CD4-positive, alpha-beta T cell (primary cell): ENCODE measurements at regions of chr2 and their contacts with region 1.

Region 1: DNA sequence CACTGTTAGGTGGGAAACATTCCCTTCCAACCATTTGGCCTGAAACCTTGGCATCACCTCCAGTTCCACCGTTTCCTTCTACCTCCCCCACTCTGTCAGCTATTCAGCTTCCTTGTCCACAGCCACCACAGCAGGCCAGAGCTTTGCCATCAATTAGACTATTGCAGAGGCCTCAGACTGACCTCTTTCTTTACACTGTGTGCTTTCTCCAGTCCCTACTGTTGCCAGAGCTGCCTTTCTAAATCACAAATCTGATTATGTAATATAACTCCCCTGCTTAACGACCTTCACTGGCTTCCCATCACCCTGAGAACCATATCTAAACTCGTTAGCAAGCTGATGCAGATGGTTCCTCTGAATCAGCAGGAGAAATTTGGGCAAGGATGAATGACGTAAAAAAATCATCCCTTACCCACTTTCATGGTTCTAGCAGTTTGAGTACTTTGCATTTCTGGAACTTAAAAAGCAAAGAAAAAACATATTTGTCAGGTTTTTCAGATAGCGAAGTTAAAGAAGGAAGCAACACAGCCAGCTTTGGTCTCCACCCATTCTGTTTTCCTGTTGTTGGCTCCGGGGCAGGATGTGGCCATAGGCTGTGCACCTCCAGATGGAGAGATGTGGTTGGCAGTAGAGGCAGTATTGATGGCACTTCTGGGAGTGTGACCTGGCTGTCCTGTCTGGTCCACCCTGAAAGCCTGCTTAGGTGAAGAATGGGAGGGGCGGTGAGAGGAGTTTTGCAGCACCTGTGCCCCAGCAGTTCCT is 422.1 kb downstream of the PARD3B start:
- DNase-seq: peak; percentile 33 to 87 (median 68)
- ATAC-seq: peak; percentile 78
- H3K4me3 ChIP-seq: no peak overlapping the region
- H3K4me3 Mint-ChIP-seq: peak overlapping the region; percentile 44
- H3K27ac ChIP-seq: peak overlapping the region; percentile 69 to 79
- H3K27ac Mint-ChIP-seq: peak overlapping the region; percentile 95
- H3K4me1 ChIP-seq: peaks cover 39% of the 10 kb centered on the region
- H3K4me1 Mint-ChIP-seq: peaks cover 74% of the 10 kb centered on the region
- H3K27me3 ChIP-seq: no peaks in the 10 kb centered on the region
- H3K27me3 Mint-ChIP-seq: no peaks in the 10 kb centered on the region
- CTCF ChIP-seq: no peak

Region 2: DNA sequence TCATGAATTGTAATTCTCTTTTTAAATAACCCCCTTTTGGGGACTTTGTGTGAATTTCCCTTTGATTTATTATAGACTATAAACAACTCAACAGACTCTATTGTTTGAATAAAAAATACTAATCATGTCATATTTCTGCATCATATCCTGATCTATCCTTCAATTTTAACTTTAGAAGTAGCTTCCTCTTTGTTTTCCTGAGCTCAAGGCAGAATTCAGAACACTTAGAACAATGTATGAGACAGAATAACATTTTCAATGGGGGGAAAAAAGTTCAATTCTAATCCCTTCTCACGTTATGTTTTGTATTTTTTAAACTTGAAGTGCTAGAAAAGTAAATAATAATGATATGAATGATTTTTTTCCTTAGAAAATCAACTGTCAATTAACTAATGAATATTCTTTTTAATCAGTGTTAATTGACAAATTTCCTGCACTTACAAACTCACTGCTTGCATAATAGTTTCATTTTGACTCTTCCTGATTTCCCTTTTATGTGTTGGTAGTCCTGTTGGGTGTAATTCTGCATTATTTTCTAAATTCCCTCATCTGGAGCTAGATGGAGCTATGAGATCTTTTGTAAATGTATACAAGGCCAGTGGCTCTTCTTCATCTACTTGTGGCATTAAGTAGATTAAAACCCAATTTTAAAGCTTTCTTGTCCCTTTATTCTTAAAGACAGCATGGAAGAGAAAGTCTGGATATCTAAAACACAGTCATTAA is 96.0 kb before region 1 on chr2:
- CTCF ChIA-PET with region 1: no interaction called
- POLR2A ChIA-PET with region 1: interaction called, 13 read pairs
- intact Hi-C with region 1: no loop called
- DNase-seq: peak in 3 of 14 experiments; percentile 60 to 71 (median 61)
- ATAC-seq: peak; percentile 59
- H3K4me3 ChIP-seq: no peak overlapping the region
- H3K4me3 Mint-ChIP-seq: no peak overlapping the region
- H3K27ac ChIP-seq: no peak overlapping the region
- H3K27ac Mint-ChIP-seq: no peak overlapping the region
- H3K4me1 ChIP-seq: peaks cover 3% of the 10 kb centered on the region
- H3K4me1 Mint-ChIP-seq: peaks cover 52% of the 10 kb centered on the region
- H3K27me3 ChIP-seq: no peaks in the 10 kb centered on the region
- H3K27me3 Mint-ChIP-seq: no peaks in the 10 kb centered on the region
- CTCF ChIP-seq: peak; percentile 84

Region 3: GRCh38 chr2:204885747-204886146 is 81.6 kb before region 1 on chr2:
- CTCF ChIA-PET with region 1: no interaction called
- POLR2A ChIA-PET with region 1: interaction called, 10 read pairs
- intact Hi-C with region 1: no loop called
- DNase-seq: peak in 3 of 14 experiments; percentile 13 to 28 (median 26)
- ATAC-seq: no peak
- H3K4me3 ChIP-seq: no peak overlapping the region
- H3K4me3 Mint-ChIP-seq: no peak overlapping the region
- H3K27ac ChIP-seq: no peak overlapping the region
- H3K27ac Mint-ChIP-seq: no peak overlapping the region
- H3K4me1 ChIP-seq: peaks cover 6% of the 10 kb centered on the region
- H3K4me1 Mint-ChIP-seq: peaks cover 20% of the 10 kb centered on the region
- H3K27me3 ChIP-seq: no peaks in the 10 kb centered on the region
- H3K27me3 Mint-ChIP-seq: no peaks in the 10 kb centered on the region
- CTCF ChIP-seq: no peak

Region 4: DNA sequence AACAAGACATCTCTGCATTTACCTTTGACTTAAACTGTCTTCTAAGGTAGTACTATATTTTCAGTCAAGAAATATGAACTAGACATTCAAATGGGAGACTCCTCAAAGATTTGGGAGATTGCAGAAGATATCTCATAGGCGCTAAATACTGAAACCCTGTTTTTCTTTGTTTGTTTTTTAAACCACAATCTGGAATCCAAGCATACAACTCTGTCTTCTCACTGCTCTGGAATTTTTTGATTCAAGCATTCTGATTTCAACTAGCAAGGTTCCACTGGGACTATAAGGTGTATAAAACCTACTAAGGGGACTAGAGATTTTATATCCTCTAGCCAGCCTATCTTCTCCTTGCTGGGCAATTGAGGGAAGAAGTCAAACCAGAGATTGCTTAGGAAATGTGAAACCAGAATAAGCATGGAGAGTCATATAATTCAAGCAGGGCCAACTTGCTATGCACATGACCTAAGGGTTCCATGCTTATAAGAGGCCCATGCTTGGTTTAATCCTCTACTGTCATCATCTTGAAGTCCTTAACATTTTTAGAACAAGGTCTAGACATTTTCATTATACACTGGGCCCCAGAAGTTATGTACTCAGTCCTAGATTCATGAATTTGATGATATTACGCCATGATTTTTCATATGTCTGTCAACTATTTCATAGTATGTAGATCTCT is 16.6 kb before region 1 on chr2:
- CTCF ChIA-PET with region 1: no interaction called
- POLR2A ChIA-PET with region 1: interaction called, 35 read pairs
- intact Hi-C with region 1: loop called in 1 of 2 experiments (anchors 1 kb)
- DNase-seq: no peak
- ATAC-seq: no peak
- H3K4me3 ChIP-seq: no peak overlapping the region
- H3K4me3 Mint-ChIP-seq: no peak overlapping the region
- H3K27ac ChIP-seq: no peak overlapping the region
- H3K27ac Mint-ChIP-seq: peak overlapping the region; percentile 11
- H3K4me1 ChIP-seq: peaks cover 10% of the 10 kb centered on the region
- H3K4me1 Mint-ChIP-seq: peaks cover 59% of the 10 kb centered on the region
- H3K27me3 ChIP-seq: no peaks in the 10 kb centered on the region
- H3K27me3 Mint-ChIP-seq: no peaks in the 10 kb centered on the region
- CTCF ChIP-seq: no peak

Region 5: GRCh38 chr2:204982303-204982702 is 14.9 kb after region 1 on chr2:
- CTCF ChIA-PET with region 1: no interaction called
- POLR2A ChIA-PET with region 1: interaction called, 15 read pairs
- intact Hi-C with region 1: no loop called
- DNase-seq: peak in 1 of 14 experiments; percentile 25
- ATAC-seq: peak; percentile 43
- H3K4me3 ChIP-seq: no peak overlapping the region
- H3K4me3 Mint-ChIP-seq: no peak overlapping the region
- H3K27ac ChIP-seq: no peak overlapping the region
- H3K27ac Mint-ChIP-seq: peak overlapping the region; percentile 13
- H3K4me1 ChIP-seq: peaks cover 4% of the 10 kb centered on the region
- H3K4me1 Mint-ChIP-seq: peaks cover 27% of the 10 kb centered on the region
- H3K27me3 ChIP-seq: no peaks in the 10 kb centered on the region
- H3K27me3 Mint-ChIP-seq: no peaks in the 10 kb centered on the region
- CTCF ChIP-seq: no peak

Region 6: GRCh38 chr2:205017381-205017780 is 50.0 kb after region 1 on chr2:
- CTCF ChIA-PET with region 1: no interaction called
- POLR2A ChIA-PET with region 1: no interaction called
- intact Hi-C with region 1: no loop called
- DNase-seq: no peak
- ATAC-seq: no peak
- H3K4me3 ChIP-seq: no peak overlapping the region
- H3K4me3 Mint-ChIP-seq: no peak overlapping the region
- H3K27ac ChIP-seq: no peak overlapping the region
- H3K27ac Mint-ChIP-seq: no peak overlapping the region
- H3K4me1 ChIP-seq: no peaks in the 10 kb centered on the region
- H3K4me1 Mint-ChIP-seq: peaks cover 5% of the 10 kb centered on the region
- H3K27me3 ChIP-seq: no peaks in the 10 kb centered on the region
- H3K27me3 Mint-ChIP-seq: no peaks in the 10 kb centered on the region
- CTCF ChIP-seq: no peak

Region 7: GRCh38 chr2:205077159-205077558 is 109.8 kb after region 1 on chr2:
- CTCF ChIA-PET with region 1: no interaction called
- POLR2A ChIA-PET with region 1: interaction called, 6 read pairs
- intact Hi-C with region 1: loop called in 1 of 2 experiments (anchors 2 kb)
- DNase-seq: peak in 4 of 14 experiments; percentile 12 to 70 (median 60)
- ATAC-seq: peak; percentile 79
- H3K4me3 ChIP-seq: peak overlapping the region; percentile 17
- H3K4me3 Mint-ChIP-seq: peak overlapping the region; percentile 79
- H3K27ac ChIP-seq: peak overlapping the region; percentile 57 to 61
- H3K27ac Mint-ChIP-seq: peak overlapping the region; percentile 94
- H3K4me1 ChIP-seq: peaks cover 12% of the 10 kb centered on the region
- H3K4me1 Mint-ChIP-seq: peaks cover 76% of the 10 kb centered on the region
- H3K27me3 ChIP-seq: no peaks in the 10 kb centered on the region
- H3K27me3 Mint-ChIP-seq: no peaks in the 10 kb centered on the region
- CTCF ChIP-seq: no peak

Region 8: GRCh38 chr2:205133544-205133943 is 166.2 kb after region 1 on chr2:
- CTCF ChIA-PET with region 1: no interaction called
- POLR2A ChIA-PET with region 1: interaction called, 12 read pairs
- intact Hi-C with region 1: no loop called
- DNase-seq: no peak
- ATAC-seq: no peak
- H3K4me3 ChIP-seq: no peak overlapping the region
- H3K4me3 Mint-ChIP-seq: no peak overlapping the region
- H3K27ac ChIP-seq: no peak overlapping the region
- H3K27ac Mint-ChIP-seq: no peak overlapping the region
- H3K4me1 ChIP-seq: peaks cover 9% of the 10 kb centered on the region
- H3K4me1 Mint-ChIP-seq: peaks cover 22% of the 10 kb centered on the region
- H3K27me3 ChIP-seq: no peaks in the 10 kb centered on the region
- H3K27me3 Mint-ChIP-seq: no peaks in the 10 kb centered on the region
- CTCF ChIP-seq: no peak